T-cell (primary cell): ENCODE measurements at regions of chr1 and their contacts with region 1.

Region 1: DNA sequence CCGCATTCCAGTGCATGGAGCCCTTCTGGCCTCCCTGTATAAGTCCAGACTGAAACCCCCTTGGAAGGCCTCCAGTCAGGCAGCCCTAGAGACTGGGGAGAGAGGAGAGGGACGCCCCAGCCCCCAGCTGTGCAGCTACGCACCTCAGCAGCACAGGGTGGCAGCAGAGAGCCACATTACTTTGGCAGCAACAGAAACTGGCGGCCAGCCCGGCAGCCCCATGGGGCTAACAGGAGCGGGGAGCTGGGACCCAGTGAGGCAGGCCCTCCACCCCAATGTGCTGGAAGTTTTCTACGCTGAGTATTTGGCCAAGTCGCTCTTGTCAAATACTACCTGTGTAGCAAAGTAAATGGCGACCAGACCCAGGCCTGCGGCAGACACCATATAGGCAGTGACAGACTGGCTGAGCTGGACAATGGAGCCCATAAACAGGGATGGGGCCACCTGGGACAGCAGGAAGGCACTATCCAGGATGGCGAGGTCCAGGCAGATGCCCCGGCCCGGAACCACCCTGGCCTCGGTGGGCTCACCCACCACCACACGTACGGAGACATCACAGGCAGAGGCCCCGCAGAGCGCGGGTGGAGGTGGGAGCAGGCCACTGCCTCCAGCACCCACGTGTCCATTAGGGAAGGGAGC is 21.2 kb downstream of the SLC45A3 start:
- DNase-seq: peak; percentile 32 to 81 (median 67)
- ATAC-seq: peak; percentile 83 to 94 (median 88)
- H3K4me3 ChIP-seq: no peak overlapping the region
- H3K4me3 Mint-ChIP-seq: no peak overlapping the region
- H3K27ac ChIP-seq: no peak overlapping the region
- H3K27ac Mint-ChIP-seq: no peak overlapping the region
- H3K4me1 ChIP-seq: peaks cover 0 to 4% of the 10 kb centered on the region in 2 experiments
- H3K4me1 Mint-ChIP-seq: peaks cover 0 to 5% (median 0%) of the 10 kb centered on the region in 3 donors
- H3K27me3 ChIP-seq: peaks cover 0 to 29% of the 10 kb centered on the region in 2 experiments
- H3K27me3 Mint-ChIP-seq: peaks cover 4 to 6% of the 10 kb centered on the region in 2 donors

Region 2: DNA sequence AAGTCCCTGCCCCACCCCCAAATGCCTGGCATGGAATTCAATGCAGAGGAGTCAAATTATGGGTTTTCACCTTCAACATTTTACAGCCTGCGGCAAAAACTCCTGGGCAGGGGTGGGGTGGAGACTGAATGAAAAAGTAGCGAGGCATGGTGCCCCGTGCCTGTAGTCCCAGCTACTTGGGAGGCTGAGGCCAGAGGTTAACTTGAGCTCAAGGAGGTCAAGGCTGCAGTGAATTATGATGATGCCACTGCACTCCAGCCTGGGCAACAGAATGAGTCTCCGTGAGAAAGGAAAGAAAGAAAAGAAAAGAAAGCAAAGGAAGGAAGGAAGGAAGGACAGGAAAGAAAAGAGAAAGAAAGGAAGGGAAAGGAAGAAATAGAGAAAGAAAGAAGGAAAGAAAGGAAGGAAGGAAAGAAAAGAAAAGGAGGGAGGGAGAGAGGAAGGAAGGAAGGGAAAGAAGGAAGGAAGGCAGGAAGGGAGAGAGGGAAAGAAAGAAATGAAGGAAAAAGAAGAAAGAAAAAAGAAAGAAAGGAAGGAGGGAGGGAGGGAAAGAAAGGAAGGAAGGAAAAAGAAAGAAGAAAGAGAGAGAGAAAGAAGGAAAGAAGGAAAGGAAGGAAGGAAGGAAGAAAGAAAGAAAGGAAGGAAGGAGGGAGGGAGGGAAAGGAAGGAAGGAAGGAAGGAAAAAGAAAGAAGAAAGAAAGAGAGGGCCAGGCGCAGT is 248.3 kb before region 1 on chr1:
- CTCF ChIA-PET with region 1: no interaction called
- POLR2A ChIA-PET with region 1: no interaction called
- DNase-seq: no peak
- ATAC-seq: no peak
- H3K4me3 ChIP-seq: no peak overlapping the region
- H3K4me3 Mint-ChIP-seq: no peak overlapping the region
- H3K27ac ChIP-seq: no peak overlapping the region
- H3K27ac Mint-ChIP-seq: no peak overlapping the region
- H3K4me1 ChIP-seq: peaks cover 0 to 8% of the 10 kb centered on the region in 2 experiments
- H3K4me1 Mint-ChIP-seq: peaks cover 10 to 18% (median 14%) of the 10 kb centered on the region in 3 donors
- H3K27me3 ChIP-seq: peaks cover 0 to 10% of the 10 kb centered on the region in 2 experiments
- H3K27me3 Mint-ChIP-seq: peaks cover 8 to 12% of the 10 kb centered on the region in 2 donors

Region 3: GRCh38 chr1:205458777-205459566 is 200.1 kb before region 1 on chr1:
- CTCF ChIA-PET with region 1: no interaction called
- POLR2A ChIA-PET with region 1: no interaction called
- DNase-seq: peak in 21 of 35 experiments; percentile 9 to 49 (median 29)
- ATAC-seq: peak in 2 of 4 experiments; percentile 38 to 60
- H3K4me3 ChIP-seq: no peak overlapping the region
- H3K4me3 Mint-ChIP-seq: no peak overlapping the region
- H3K27ac ChIP-seq: no peak overlapping the region
- H3K27ac Mint-ChIP-seq: no peak overlapping the region
- H3K4me1 ChIP-seq: peaks cover 2 to 28% of the 10 kb centered on the region in 2 experiments
- H3K4me1 Mint-ChIP-seq: peaks cover 17 to 25% (median 17%) of the 10 kb centered on the region in 3 donors
- H3K27me3 ChIP-seq: peaks cover 12 to 58% of the 10 kb centered on the region in 2 experiments
- H3K27me3 Mint-ChIP-seq: peaks cover 51 to 57% of the 10 kb centered on the region in 2 donors

Region 4: GRCh38 chr1:205523891-205524793 is 134.9 kb before region 1 on chr1:
- CTCF ChIA-PET with region 1: interaction called, 23 to 35 read pairs
- POLR2A ChIA-PET with region 1: no interaction called
- DNase-seq: peak; percentile 26 to 83 (median 65)
- ATAC-seq: peak; percentile 46 to 62 (median 52)
- H3K4me3 ChIP-seq: no peak overlapping the region
- H3K4me3 Mint-ChIP-seq: no peak overlapping the region
- H3K27ac ChIP-seq: no peak overlapping the region
- H3K27ac Mint-ChIP-seq: no peak overlapping the region
- H3K4me1 ChIP-seq: peaks cover 0 to 6% of the 10 kb centered on the region in 2 experiments
- H3K4me1 Mint-ChIP-seq: no peaks in the 10 kb centered on the region
- H3K27me3 ChIP-seq: peaks cover 0 to 24% of the 10 kb centered on the region in 2 experiments
- H3K27me3 Mint-ChIP-seq: peaks cover 4 to 8% of the 10 kb centered on the region in 2 donors

Region 5: GRCh38 chr1:205591522-205592351 is 67.3 kb before region 1 on chr1:
- CTCF ChIA-PET with region 1: interaction called, 33 to 142 read pairs
- POLR2A ChIA-PET with region 1: interaction called in 1 of 2 experiments, 4 read pairs
- DNase-seq: peak; percentile 72 to 94 (median 86)
- ATAC-seq: peak; percentile 83 to 89 (median 88)
- H3K4me3 ChIP-seq: peak overlapping the region; percentile 39 to 46
- H3K4me3 Mint-ChIP-seq: peak overlapping the region; percentile 74 to 89 (median 79)
- H3K27ac ChIP-seq: peak overlapping the region; percentile 89
- H3K27ac Mint-ChIP-seq: peak overlapping the region; percentile 86 to 88
- H3K4me1 ChIP-seq: peaks cover 14 to 33% of the 10 kb centered on the region in 2 experiments
- H3K4me1 Mint-ChIP-seq: peaks cover 40 to 54% (median 51%) of the 10 kb centered on the region in 3 donors
- H3K27me3 ChIP-seq: peaks cover 0 to 6% of the 10 kb centered on the region in 2 experiments
- H3K27me3 Mint-ChIP-seq: no peaks in the 10 kb centered on the region

Region 6: DNA sequence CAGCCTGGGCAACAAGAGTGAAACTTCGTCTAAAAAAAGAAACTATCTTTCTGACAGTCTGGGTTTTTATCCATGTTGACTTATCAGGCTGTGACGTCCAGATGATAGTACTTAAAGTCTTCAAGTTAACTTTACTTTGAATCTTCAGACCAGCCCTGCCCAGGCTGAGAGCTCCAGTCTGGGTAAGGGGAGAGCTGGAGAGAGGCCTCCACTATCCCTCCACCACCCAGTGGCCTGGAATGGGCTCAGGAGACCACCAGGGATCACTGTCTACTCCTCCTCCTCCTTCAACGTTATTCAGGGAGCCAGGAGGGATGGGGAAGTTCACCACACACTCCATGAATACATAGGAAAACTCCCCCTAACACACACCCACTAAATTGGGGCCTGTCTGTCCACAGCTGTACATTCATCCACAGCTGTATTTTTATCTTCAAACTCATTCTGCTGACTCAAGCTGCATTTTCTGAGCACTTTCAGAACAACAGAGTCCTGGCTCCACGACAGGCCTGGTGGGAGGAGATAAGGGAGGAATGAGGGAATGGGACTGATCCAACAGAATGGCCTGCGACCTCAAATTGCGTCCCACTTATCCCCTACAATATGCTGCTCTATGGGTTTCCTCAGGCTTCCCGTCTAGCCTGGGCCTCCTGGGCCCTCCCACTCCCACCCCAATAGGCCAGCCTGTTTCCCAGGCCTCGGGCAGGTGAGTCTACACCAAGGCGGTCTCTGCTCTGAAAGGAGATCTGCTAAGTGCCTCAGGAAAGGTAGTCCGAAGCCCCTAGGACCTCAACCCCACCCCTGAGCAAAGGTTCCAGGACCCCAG is 19.4 kb after region 1 on chr1:
- CTCF ChIA-PET with region 1: interaction called in 1 of 2 experiments, 17 read pairs
- POLR2A ChIA-PET with region 1: no interaction called
- DNase-seq: no peak
- ATAC-seq: no peak
- H3K4me3 ChIP-seq: no peak overlapping the region
- H3K4me3 Mint-ChIP-seq: peak overlapping the region; percentile 70 to 77 (median 75)
- H3K27ac ChIP-seq: no peak overlapping the region
- H3K27ac Mint-ChIP-seq: no peak overlapping the region
- H3K4me1 ChIP-seq: peaks cover 0 to 15% of the 10 kb centered on the region in 2 experiments
- H3K4me1 Mint-ChIP-seq: peaks cover 11 to 14% (median 14%) of the 10 kb centered on the region in 3 donors
- H3K27me3 ChIP-seq: peaks cover 0 to 35% of the 10 kb centered on the region in 2 experiments
- H3K27me3 Mint-ChIP-seq: peaks cover 12 to 13% of the 10 kb centered on the region in 2 donors

Region 7: DNA sequence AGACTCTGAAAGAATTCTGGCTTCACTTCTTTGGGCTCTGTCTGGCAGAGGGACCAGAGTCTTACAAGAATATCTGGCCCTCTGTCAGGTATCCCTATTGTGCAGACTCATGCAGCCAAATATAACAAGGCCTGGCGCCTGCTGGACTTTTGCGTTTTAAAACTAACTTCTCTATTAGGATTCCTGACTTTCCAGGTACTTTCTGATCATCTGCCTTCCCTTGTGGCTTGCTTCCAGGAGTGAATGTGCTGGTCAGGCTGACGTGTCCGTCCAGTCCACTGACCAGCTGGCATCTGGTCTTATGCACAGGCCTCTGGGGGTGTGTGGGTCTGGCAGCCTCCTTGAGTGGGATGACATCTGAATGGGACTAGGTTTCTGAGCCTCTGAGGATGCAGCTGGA is 124.8 kb after region 1 on chr1:
- CTCF ChIA-PET with region 1: interaction called, 6 to 17 read pairs
- POLR2A ChIA-PET with region 1: no interaction called
- DNase-seq: no peak
- ATAC-seq: no peak
- H3K4me3 ChIP-seq: no peak overlapping the region
- H3K4me3 Mint-ChIP-seq: no peak overlapping the region
- H3K27ac ChIP-seq: no peak overlapping the region
- H3K27ac Mint-ChIP-seq: no peak overlapping the region
- H3K4me1 ChIP-seq: peaks cover 0 to 3% of the 10 kb centered on the region in 2 experiments
- H3K4me1 Mint-ChIP-seq: peaks cover 6 to 9% (median 8%) of the 10 kb centered on the region in 3 donors
- H3K27me3 ChIP-seq: peaks cover 0 to 3% of the 10 kb centered on the region in 2 experiments
- H3K27me3 Mint-ChIP-seq: no peaks in the 10 kb centered on the region

Region 8: GRCh38 chr1:206106328-206107167 is 447.5 kb after region 1 on chr1:
- CTCF ChIA-PET with region 1: interaction called in 1 of 2 experiments, 10 read pairs
- POLR2A ChIA-PET with region 1: no interaction called
- DNase-seq: peak; percentile 40 to 86 (median 66)
- ATAC-seq: peak; percentile 75 to 85 (median 82)
- H3K4me3 ChIP-seq: no peak overlapping the region
- H3K4me3 Mint-ChIP-seq: no peak overlapping the region
- H3K27ac ChIP-seq: no peak overlapping the region
- H3K27ac Mint-ChIP-seq: peak overlapping the region in 1 of 2 donors; percentile 39
- H3K4me1 ChIP-seq: no peaks in the 10 kb centered on the region
- H3K4me1 Mint-ChIP-seq: peaks cover 0 to 12% (median 0%) of the 10 kb centered on the region in 3 donors
- H3K27me3 ChIP-seq: peaks cover 0 to 5% of the 10 kb centered on the region in 2 experiments
- H3K27me3 Mint-ChIP-seq: peaks cover 0 to 5% of the 10 kb centered on the region in 2 donors